ENCODE measurements at regions of chr12 and their contacts with region 1.

Region 1: DNA sequence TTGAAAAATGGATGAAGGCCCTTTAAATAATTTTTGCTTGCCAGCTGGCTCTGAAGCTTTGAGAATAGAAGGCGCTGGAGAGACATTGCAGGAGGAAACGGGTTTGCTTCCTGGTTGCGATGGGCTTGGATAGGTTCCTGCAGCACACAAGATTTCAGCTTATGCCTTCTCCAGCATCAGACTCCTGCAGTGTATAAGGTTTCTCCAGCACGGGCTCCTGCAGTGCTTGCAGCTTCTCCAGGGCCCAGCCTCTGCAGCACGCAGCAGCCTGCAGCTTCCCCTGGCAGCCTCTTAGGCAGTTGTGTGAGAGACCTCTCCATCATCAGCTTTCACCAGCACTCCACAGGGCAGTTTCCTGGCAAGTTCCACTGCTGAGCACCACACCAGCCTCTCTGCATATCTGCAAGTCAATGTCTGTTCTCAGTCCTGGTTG is 78.7 kb upstream of the ZDHHC17 start:
- DNase-seq: no peak
- ATAC-seq: peak; percentile 39
- H3K4me3 ChIP-seq: no peak overlapping the region
- H3K27ac ChIP-seq: no peak overlapping the region
- H3K4me1 ChIP-seq: no peaks in the 10 kb centered on the region; a peak in 1 of 5 replicates
- H3K27me3 ChIP-seq: peaks cover 0 to 4% of the 10 kb centered on the region in 2 experiments; a peak in 1 of 5 replicates
- CTCF ChIP-seq: no peak
- EP300 ChIP-seq: no peak
- POLR2A ChIP-seq: no peak
- RAD21 ChIP-seq: no peak

Region 2: DNA sequence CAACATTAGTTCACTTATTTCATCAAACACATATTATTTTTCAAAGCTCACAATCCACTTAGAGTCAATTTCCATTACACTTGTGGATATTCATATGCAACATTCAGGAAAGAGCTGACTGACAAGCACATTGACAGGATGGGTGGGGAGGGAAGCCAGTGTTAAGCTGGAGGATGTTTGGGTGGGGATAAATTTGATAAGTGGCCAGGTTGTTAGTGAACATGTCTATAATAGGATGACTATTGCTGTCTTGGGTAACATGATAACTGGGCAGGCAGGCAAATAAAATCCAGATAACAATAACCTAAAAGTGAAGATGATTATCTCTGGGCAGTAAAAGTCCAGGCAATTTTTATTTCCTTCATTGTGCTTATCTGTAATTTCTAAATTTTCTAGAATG is 51.8 kb before region 1 on chr12:
- CTCF ChIA-PET with region 1: no interaction called
- POLR2A ChIA-PET with region 1: no interaction called
- in situ Hi-C with region 1: no loop called
- intact Hi-C with region 1: loop called (anchors 5 kb)
- DNase-seq: peak; percentile 12 to 52 (median 28)
- ATAC-seq: no peak
- H3K4me3 ChIP-seq: no peak overlapping the region
- H3K27ac ChIP-seq: no peak overlapping the region
- H3K4me1 ChIP-seq: peaks cover 8 to 24% of the 10 kb centered on the region in 2 experiments; a peak in 4 of 5 replicates
- H3K27me3 ChIP-seq: no peaks in the 10 kb centered on the region
- CTCF ChIP-seq: no peak
- EP300 ChIP-seq: peak; percentile 42; the same call in 1 of the 2 replicates
- POLR2A ChIP-seq: no peak
- RAD21 ChIP-seq: no peak

Region 3: GRCh38 chr12:76927170-76927784 is 242.0 kb after region 1 on chr12:
- CTCF ChIA-PET with region 1: no interaction called
- POLR2A ChIA-PET with region 1: no interaction called
- in situ Hi-C with region 1: no loop called
- intact Hi-C with region 1: loop called (anchors 5 kb)
- DNase-seq: peak; percentile 35 to 69 (median 48)
- ATAC-seq: peak; percentile 89
- H3K4me3 ChIP-seq: no peak overlapping the region
- H3K27ac ChIP-seq: no peak overlapping the region
- H3K4me1 ChIP-seq: no peaks in the 10 kb centered on the region
- H3K27me3 ChIP-seq: peaks cover 0 to 5% of the 10 kb centered on the region in 2 experiments; a peak in 3 of 5 replicates
- CTCF ChIP-seq: peak; percentile 52 to 74 (median 65)
- EP300 ChIP-seq: no peak
- POLR2A ChIP-seq: no peak
- RAD21 ChIP-seq: peak; percentile 48 to 85

Measured in K562 (cell line).